ENCODE measurements at regions of chr11 and their contacts with region 1.

Region 1: GRCh38 chr11:67630228-67630942 is 648 bp upstream of the NUDT8 start:
- DNase-seq: peak; percentile 100
- H3K4me3 ChIP-seq: peak overlapping the region; percentile 74 to 94 (median 76)
- H3K27ac ChIP-seq: peak overlapping the region; percentile 95 to 97 (median 96)
- H3K4me1 ChIP-seq: peaks cover 11 to 29% (median 22%) of the 10 kb centered on the region in 4 donors
- H3K27me3 ChIP-seq: peaks cover 0 to 8% (median 0%) of the 10 kb centered on the region in 4 donors
- CTCF ChIP-seq: peak; percentile 60 to 76 (median 74)
- EP300 ChIP-seq: no peak
- POLR2A ChIP-seq: no peak

Region 2: GRCh38 chr11:67644042-67644441 is 13.7 kb after region 1 on chr11:
- intact Hi-C with region 1: no loop called
- DNase-seq: no peak
- H3K4me3 ChIP-seq: no peak overlapping the region
- H3K27ac ChIP-seq: no peak overlapping the region
- H3K4me1 ChIP-seq: peaks cover 0 to 6% (median 2%) of the 10 kb centered on the region in 4 donors
- H3K27me3 ChIP-seq: peaks cover 0 to 62% (median 0%) of the 10 kb centered on the region in 4 donors
- CTCF ChIP-seq: no peak
- EP300 ChIP-seq: no peak
- POLR2A ChIP-seq: no peak

Region 3: DNA sequence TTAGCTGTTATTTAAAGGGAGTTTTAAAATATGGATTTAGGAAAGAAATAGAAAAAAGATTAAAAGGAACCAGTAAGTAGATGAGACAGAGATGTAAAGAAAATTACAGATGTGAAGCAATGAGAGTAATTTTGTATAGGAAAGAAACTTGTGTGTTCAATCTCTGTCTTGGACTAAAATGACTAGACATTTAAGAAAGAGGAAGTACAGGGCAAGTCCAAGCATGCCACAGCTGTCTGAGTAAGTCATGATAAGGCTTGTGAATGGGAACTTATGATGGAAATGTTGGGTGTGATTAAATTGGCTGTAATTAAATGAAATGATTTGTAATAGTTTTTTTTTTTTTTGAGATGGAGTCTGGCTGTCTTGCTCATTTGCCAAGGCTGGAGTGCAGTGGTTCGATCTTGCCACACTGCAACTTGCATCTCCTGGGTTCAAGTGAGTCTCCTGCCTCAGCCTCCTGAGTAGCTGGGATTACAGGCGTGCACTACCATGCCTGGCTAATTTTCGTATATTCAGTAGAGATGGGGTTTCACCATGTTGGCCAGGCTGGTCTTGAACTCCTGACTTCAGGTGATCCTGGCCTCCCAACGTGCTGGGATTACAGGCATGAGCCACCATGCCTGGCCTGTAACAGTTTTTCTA is 26.0 kb after region 1 on chr11:
- intact Hi-C with region 1: loop called (anchors 2 kb)
- DNase-seq: no peak
- H3K4me3 ChIP-seq: no peak overlapping the region
- H3K27ac ChIP-seq: no peak overlapping the region
- H3K4me1 ChIP-seq: no peaks in the 10 kb centered on the region
- H3K27me3 ChIP-seq: peaks cover 0 to 10% (median 0%) of the 10 kb centered on the region in 4 donors
- CTCF ChIP-seq: no peak
- EP300 ChIP-seq: no peak
- POLR2A ChIP-seq: no peak

Region 4: GRCh38 chr11:67705264-67705663 is 74.9 kb after region 1 on chr11:
- intact Hi-C with region 1: no loop called
- DNase-seq: no peak
- H3K4me3 ChIP-seq: no peak overlapping the region
- H3K27ac ChIP-seq: no peak overlapping the region
- H3K4me1 ChIP-seq: no peaks in the 10 kb centered on the region
- H3K27me3 ChIP-seq: peaks cover 0 to 4% (median 0%) of the 10 kb centered on the region in 4 donors
- CTCF ChIP-seq: no peak
- EP300 ChIP-seq: no peak
- POLR2A ChIP-seq: no peak

Measured in esophagus muscularis mucosa (tissue), 4 donors.